ENCODE measurements at regions of chr12 and their contacts with region 1.

Region 1: GRCh38 chr12:68310370-68310769 is 21.8 kb downstream of the MDM1 start:
- DNase-seq: no peak
- ATAC-seq: no peak
- H3K4me3 ChIP-seq: no peak overlapping the region
- H3K27ac ChIP-seq: no peak overlapping the region
- H3K4me1 ChIP-seq: peaks cover 1 to 2% of the 10 kb centered on the region in 2 donors
- H3K27me3 ChIP-seq: no peaks in the 10 kb centered on the region

Region 2: GRCh38 chr12:68223083-68223747 is 87.2 kb before region 1 on chr12:
- intact Hi-C with region 1: loop called in 1 of 2 experiments (anchors 2 kb)
- DNase-seq: peak; percentile 83 to 87
- ATAC-seq: peak; percentile 96
- H3K4me3 ChIP-seq: no peak overlapping the region
- H3K27ac ChIP-seq: no peak overlapping the region
- H3K4me1 ChIP-seq: no peaks in the 10 kb centered on the region
- H3K27me3 ChIP-seq: no peaks in the 10 kb centered on the region

Region 3: DNA sequence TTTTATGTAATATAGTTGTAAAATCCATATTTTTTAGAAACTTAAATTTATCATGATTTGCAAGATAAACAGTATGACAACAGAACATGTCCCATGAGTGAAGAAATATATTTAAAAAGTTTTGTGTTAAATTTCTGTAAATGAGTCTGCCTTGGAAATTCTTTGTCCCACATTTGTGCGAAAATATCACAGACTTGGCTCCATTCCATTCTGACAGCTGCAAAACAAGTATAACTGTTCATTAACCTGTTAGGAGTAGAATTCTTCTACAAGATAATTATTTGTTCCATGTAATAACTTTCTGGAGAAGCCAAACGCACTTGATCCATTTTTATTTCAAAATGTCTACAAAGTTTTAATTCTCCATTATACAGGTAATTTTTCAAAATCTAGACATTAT is 16.1 kb before region 1 on chr12:
- intact Hi-C with region 1: no loop called
- DNase-seq: no peak
- ATAC-seq: no peak
- H3K4me3 ChIP-seq: no peak overlapping the region
- H3K27ac ChIP-seq: no peak overlapping the region
- H3K4me1 ChIP-seq: no peaks in the 10 kb centered on the region
- H3K27me3 ChIP-seq: no peaks in the 10 kb centered on the region

Region 4: DNA sequence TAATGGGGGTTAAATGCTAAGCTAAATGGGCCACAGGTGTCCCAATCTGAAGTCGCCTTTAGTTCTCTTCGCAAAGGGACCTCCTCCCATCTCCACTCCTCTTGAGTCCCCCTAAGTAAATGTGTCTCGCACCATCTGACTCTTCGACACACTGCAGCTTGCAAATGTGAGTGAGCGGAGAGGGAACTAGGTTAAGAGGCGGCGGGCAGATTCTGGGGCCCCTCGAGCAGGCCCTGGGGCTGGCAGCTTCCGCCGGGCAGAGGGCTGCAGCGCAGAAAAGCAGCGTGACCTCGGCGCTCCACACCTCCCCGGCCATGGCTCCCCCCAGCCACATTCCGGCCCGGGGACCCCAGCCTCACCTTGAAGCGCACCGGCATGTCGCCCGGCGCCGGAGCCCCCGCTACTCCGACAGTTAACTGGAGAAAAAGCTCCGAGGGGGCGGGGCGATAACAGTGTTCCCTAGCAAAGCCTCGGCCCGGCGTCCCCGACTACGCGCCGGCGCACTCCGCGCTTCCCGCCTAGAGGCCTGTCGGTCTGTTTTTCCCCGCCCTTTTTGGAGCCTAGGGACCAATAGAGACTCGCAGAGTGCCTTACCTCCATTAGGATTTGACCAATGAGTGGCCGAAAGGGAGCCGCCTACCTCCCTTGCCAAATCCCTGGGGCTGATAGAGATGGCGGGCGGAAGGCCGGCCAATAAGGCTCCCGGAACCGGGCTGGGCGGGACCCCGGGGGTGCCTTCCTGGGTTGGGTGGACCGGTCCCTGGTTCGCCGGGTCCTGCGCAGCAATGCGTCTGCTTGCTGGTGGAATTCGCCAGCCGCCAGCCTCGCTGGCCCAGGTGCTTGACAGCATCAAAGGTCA is 21.7 kb after region 1 on chr12 and contains the start of gene MDM1:
- intact Hi-C with region 1: loop called in 1 of 2 experiments (anchors 1 kb)
- DNase-seq: peak; percentile 98 to 99
- ATAC-seq: peak; percentile 99
- H3K4me3 ChIP-seq: peak within 1 kb of the TSS; percentile 86 to 92
- H3K27ac ChIP-seq: no peak within 1 kb of the TSS
- H3K4me1 ChIP-seq: no peaks in the 10 kb centered on the region
- H3K27me3 ChIP-seq: no peaks in the 10 kb centered on the region
- total RNA-seq, gene MDM1: 12.6 to 15.0 TPM

Measured in aorta (tissue), 5 donors.